Posterior vena cava (tissue), 2 donors: ENCODE measurements at regions of chr17 and their contacts with region 1.

Region 1: DNA sequence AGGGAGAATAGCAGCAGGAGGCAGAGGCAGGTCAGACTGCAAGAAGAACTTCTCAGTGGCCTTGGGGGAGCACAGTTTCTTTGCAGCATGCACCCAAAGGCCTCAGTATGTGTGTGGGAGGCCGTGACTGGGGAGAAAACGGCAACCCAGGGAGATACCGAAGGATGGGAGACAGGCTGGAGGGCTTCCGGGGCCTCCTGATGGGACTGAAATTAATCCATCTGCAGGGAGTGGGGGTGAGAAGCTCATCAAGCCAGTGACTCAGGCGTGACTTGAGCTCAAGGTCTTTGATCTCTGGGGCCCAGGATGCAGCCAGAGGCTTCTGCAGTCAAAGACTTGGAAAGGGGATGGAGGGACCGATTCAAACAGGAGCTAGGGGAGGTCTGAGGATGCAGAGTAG is 5.1 kb upstream of the C17orf113 start:
- DNase-seq: no peak

Region 2: DNA sequence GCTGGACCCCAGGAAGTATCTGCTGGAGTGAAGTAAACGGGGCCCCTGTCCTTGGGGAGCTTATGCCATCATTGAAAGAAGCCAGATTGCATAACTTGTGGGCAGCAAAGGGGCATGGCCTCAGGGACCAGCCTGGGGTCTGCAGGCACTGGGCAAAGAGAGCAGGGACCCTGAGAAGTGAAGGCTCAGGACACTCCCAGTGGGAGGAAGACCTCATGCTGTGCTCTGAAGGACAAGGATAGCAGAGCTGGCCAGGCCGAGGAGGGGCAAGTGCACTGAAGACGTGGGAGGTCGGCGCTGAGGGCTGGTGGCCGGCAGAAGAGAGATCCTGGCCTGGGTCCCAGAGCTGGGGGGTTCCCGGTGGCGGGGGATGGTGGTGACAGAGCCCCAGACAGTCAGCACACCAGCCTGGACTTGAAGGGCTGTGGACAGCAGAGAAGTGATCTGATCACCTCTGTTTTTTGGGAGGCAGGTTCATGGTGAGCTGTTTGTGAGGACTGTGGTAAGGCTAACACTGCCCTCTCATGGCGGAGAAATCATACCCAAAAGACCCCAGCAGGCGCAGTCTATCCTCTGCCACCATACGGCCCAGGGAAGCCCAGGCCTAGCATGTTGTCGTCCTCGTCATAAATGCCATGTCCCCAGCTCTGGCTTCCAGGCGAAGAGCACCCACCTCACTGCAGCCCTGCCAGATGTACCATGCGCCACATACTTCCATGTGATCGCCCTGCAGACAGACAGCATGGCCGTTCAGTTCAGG is 96.0 kb before region 1 on chr17:
- intact Hi-C with region 1: loop called in 1 of 2 experiments (anchors 5 kb)
- DNase-seq: no peak

Region 3: GRCh38 chr17:42135664-42136653 is 80.5 kb after region 1 on chr17:
- intact Hi-C with region 1: no loop called
- DNase-seq: no peak